Activated CD8-positive, alpha-beta T cell treated with anti-CD3 and anti-CD28 coated beads for 36 hours (primary cell): ENCODE measurements at regions of chr2 and their contacts with region 1.

Region 1: DNA sequence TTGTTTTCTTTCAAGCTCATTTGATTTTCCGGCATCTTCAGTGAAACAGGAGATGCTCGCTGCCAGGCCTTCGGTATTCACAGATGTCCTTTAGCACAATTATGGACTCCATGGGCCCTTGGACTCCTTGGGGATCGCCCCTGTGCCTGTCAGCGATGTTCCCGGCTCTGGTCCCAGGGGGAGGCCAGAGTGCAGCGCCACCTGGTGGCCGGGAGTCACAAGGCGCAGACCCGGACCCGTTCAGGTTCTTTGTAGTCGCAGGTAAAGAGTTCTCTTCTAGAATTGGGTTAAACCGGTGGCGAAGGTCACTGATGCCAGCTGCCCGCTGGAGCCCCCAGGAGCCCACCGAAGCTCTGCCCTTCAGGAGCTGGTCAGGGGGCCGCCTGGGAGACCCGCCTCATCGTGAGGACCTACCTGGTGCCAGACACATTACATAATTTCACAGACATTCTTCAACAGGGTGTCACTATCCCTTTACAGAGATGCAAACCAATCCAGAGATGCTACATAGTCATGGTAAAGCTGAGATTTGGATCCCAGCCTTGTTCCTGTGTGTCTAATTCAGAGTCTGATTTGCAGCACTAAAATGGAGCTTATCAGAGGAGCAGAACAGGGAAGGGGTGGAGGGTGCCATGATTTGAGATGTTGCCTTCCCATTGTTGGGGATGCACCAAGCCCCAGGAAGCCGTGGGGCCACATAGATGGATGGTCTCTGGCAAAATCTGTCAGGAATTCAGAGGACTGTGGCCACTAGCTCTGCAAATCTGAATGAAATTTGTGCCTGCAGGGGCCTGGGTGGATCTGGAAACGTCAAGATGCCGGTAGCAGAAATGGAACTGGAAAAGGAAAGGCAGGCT is 6.0 kb upstream of the INPP5D start:
- DNase-seq: peak; percentile 83
- ATAC-seq: peak; percentile 85
- H3K4me3 Mint-ChIP-seq: no peak overlapping the region
- H3K27ac Mint-ChIP-seq: no peak overlapping the region
- H3K4me1 Mint-ChIP-seq: peaks cover 7% of the 10 kb centered on the region
- H3K27me3 Mint-ChIP-seq: peaks cover 3% of the 10 kb centered on the region
- CTCF ChIP-seq: peak; percentile 96

Region 2: DNA sequence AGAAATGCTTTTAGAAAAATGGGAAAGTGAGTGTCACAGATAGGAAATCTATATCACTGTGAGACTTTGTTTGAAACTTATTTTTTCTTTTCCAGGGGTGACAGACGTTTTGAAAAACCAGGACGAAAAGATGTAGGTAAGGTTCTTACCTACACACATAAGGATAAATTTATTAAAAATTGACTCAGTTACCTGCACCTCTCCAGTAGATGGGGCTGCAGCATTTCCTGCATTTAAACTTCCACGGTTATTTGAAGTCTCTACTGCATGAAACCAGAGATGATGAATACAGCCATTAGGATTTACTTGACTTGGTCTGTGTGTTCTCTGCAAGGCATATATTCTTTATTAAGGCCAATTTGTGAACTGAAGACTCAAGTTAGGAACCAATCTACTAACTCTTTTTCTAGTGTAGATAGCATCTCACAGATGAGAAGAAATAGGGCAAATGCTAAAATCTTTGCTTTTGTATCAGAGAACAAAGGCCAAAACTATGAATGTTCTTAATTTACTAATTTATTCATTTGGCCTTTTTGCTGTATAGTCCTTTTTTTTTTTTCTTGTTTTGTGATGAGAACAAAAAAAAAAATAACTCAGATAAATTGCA is 292.8 kb before region 1 on chr2:
- CTCF ChIA-PET with region 1: interaction called, 10 read pairs
- POLR2A ChIA-PET with region 1: no interaction called
- intact Hi-C with region 1: no loop called
- DNase-seq: peak; percentile 47
- ATAC-seq: peak; percentile 51
- H3K4me3 Mint-ChIP-seq: no peak overlapping the region
- H3K27ac Mint-ChIP-seq: no peak overlapping the region
- H3K4me1 Mint-ChIP-seq: peaks cover 13% of the 10 kb centered on the region
- H3K27me3 Mint-ChIP-seq: no peaks in the 10 kb centered on the region
- CTCF ChIP-seq: peak; percentile 67

Region 3: DNA sequence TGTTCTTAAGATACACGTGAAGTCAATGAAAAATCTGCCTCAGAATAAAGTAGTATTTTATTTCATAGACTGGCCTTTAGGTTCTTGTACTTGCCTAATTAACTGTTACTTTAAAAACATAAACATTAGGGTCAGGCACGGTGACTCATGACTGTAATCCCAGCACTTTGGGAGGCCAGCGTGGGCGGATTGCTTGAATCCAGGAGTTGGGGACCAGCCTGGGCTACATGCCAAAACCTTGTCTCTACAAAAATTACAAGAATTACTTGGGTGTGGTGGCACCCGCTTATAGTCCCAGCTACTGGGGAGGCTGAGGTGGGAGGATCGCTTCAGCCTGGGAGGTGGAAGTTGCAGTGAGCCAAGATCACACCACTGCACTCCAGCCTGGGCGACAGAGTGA is 200.1 kb before region 1 on chr2:
- CTCF ChIA-PET with region 1: interaction called, 10 read pairs
- POLR2A ChIA-PET with region 1: no interaction called
- intact Hi-C with region 1: loop called (anchors 10 kb)
- DNase-seq: no peak
- ATAC-seq: no peak
- H3K4me3 Mint-ChIP-seq: no peak overlapping the region
- H3K27ac Mint-ChIP-seq: no peak overlapping the region
- H3K4me1 Mint-ChIP-seq: peaks cover 5% of the 10 kb centered on the region
- H3K27me3 Mint-ChIP-seq: no peaks in the 10 kb centered on the region
- CTCF ChIP-seq: no peak

Region 4: GRCh38 chr2:233033672-233034071 is 20.5 kb before region 1 on chr2:
- CTCF ChIA-PET with region 1: interaction called, 20 read pairs
- POLR2A ChIA-PET with region 1: no interaction called
- intact Hi-C with region 1: no loop called
- DNase-seq: no peak
- ATAC-seq: no peak
- H3K4me3 Mint-ChIP-seq: no peak overlapping the region
- H3K27ac Mint-ChIP-seq: no peak overlapping the region
- H3K4me1 Mint-ChIP-seq: no peaks in the 10 kb centered on the region
- H3K27me3 Mint-ChIP-seq: no peaks in the 10 kb centered on the region
- CTCF ChIP-seq: no peak

Region 5: GRCh38 chr2:233084488-233084887 is 30.3 kb after region 1 on chr2:
- CTCF ChIA-PET with region 1: interaction called, 32 read pairs
- POLR2A ChIA-PET with region 1: interaction called, 119 read pairs
- intact Hi-C with region 1: no loop called
- DNase-seq: peak; percentile 78
- ATAC-seq: peak; percentile 26
- H3K4me3 Mint-ChIP-seq: peak overlapping the region; percentile 54
- H3K27ac Mint-ChIP-seq: peak overlapping the region; percentile 85
- H3K4me1 Mint-ChIP-seq: peaks cover 80% of the 10 kb centered on the region
- H3K27me3 Mint-ChIP-seq: no peaks in the 10 kb centered on the region
- CTCF ChIP-seq: no peak

Region 6: GRCh38 chr2:233100192-233100998 is 46.2 kb after region 1 on chr2:
- CTCF ChIA-PET with region 1: interaction called, 25 read pairs
- POLR2A ChIA-PET with region 1: no interaction called
- intact Hi-C with region 1: no loop called
- DNase-seq: peak; percentile 94
- ATAC-seq: peak; percentile 87
- H3K4me3 Mint-ChIP-seq: peak overlapping the region; percentile 41
- H3K27ac Mint-ChIP-seq: peak overlapping the region; percentile 84
- H3K4me1 Mint-ChIP-seq: peaks cover 61% of the 10 kb centered on the region
- H3K27me3 Mint-ChIP-seq: no peaks in the 10 kb centered on the region
- CTCF ChIP-seq: no peak

Region 7: DNA sequence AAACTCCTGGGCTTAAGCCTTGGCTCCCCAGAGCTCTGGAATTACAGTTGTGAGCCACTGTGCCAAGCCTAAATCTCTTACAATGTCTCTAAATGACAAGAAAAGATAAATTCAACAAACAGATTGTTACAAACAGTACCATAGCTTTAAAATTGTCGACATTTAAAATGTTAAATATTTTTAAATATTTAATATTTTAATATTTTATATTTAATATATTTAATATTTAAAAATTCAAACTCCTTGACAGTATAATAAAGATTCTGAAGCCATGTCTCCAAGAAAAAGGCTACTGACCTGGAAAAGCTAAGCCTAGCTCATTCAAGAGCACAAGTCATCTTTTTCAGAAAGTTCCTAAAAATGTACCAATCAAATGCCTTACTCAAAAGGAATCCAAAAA is 81.3 kb after region 1 on chr2:
- CTCF ChIA-PET with region 1: interaction called, 15 read pairs
- POLR2A ChIA-PET with region 1: no interaction called
- intact Hi-C with region 1: no loop called
- DNase-seq: no peak
- ATAC-seq: no peak
- H3K4me3 Mint-ChIP-seq: no peak overlapping the region
- H3K27ac Mint-ChIP-seq: no peak overlapping the region
- H3K4me1 Mint-ChIP-seq: peaks cover 5% of the 10 kb centered on the region
- H3K27me3 Mint-ChIP-seq: no peaks in the 10 kb centered on the region
- CTCF ChIP-seq: no peak